GM12878 (cell line): ENCODE measurements at regions of chr5 and their contacts with region 1.

Region 1: DNA sequence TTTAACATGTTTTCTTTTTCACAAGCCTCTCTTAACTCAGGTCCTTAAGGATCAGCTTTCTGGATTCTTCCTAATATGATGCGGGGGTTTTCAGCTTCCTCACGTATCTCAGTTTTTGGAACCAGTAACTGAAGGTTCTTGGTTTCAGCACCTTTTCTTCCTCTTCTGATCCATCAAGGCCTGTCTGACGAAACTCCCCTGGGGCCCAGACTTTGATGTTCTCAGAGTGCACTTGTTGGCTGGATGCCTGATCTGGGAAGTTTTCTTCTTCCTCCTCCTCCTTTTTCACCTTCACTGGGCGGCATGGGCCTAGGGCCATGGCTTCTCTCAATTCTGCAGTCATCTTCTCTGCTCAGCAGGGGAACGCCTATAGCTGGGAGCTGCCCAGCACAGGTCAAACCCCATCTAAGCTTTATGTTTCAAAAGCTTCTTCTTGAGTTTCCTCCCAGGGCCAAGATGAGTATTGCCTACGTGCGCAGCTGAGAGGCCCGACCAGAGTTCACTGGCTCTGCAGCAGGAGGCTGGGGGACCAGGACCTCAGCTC is 44.8 kb downstream of the GHR start:
- DNase-seq: no peak
- ATAC-seq: peak; percentile 51
- H3K4me3 ChIP-seq: no peak overlapping the region
- H3K27ac ChIP-seq: no peak overlapping the region
- H3K4me1 ChIP-seq: no peaks in the 10 kb centered on the region
- H3K27me3 ChIP-seq: no peaks in the 10 kb centered on the region
- CTCF ChIP-seq: no peak
- EP300 ChIP-seq: no peak
- POLR2A ChIP-seq: no peak
- RAD21 ChIP-seq: no peak

Region 2: DNA sequence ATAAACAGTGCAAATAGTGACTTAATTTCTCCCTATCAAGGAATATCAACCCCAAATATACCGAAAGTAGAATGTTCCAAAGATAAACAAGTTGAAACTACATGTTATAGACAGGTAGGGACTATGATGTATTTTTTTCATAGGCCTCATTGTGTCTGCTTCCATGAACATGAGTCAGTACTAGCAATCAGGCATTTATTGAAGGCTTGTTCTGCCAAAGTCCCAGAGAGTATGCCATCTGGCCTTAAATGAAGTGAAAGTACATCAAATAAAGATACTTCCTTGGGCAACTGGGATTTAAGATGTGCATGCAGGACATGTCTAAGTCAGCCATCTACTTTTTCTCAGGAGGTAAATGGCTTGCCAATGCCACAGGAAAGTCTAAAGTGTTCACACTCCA is 38.4 kb before region 1 on chr5:
- CTCF ChIA-PET with region 1: interaction called, 22 read pairs
- POLR2A ChIA-PET with region 1: interaction called, 18 read pairs
- RAD21 ChIA-PET with region 1: interaction called, 79 read pairs
- SMC1A ChIA-PET with region 1: interaction called, 35 read pairs
- in situ Hi-C with region 1: no loop called
- intact Hi-C with region 1: no loop called
- DNase-seq: no peak
- ATAC-seq: no peak
- H3K4me3 ChIP-seq: no peak overlapping the region
- H3K27ac ChIP-seq: no peak overlapping the region
- H3K4me1 ChIP-seq: no peaks in the 10 kb centered on the region
- H3K27me3 ChIP-seq: no peaks in the 10 kb centered on the region
- CTCF ChIP-seq: no peak
- EP300 ChIP-seq: no peak
- POLR2A ChIP-seq: no peak
- RAD21 ChIP-seq: no peak

Region 3: GRCh38 chr5:42436051-42436450 is 32.0 kb before region 1 on chr5:
- CTCF ChIA-PET with region 1: no interaction called
- POLR2A ChIA-PET with region 1: interaction called, 9 read pairs
- RAD21 ChIA-PET with region 1: interaction called, 7 read pairs
- SMC1A ChIA-PET with region 1: interaction called, 25 read pairs
- in situ Hi-C with region 1: no loop called
- intact Hi-C with region 1: no loop called
- DNase-seq: no peak
- ATAC-seq: no peak
- H3K4me3 ChIP-seq: no peak overlapping the region
- H3K27ac ChIP-seq: no peak overlapping the region
- H3K4me1 ChIP-seq: no peaks in the 10 kb centered on the region
- H3K27me3 ChIP-seq: no peaks in the 10 kb centered on the region
- CTCF ChIP-seq: no peak
- EP300 ChIP-seq: no peak
- POLR2A ChIP-seq: no peak
- RAD21 ChIP-seq: no peak

Region 4: DNA sequence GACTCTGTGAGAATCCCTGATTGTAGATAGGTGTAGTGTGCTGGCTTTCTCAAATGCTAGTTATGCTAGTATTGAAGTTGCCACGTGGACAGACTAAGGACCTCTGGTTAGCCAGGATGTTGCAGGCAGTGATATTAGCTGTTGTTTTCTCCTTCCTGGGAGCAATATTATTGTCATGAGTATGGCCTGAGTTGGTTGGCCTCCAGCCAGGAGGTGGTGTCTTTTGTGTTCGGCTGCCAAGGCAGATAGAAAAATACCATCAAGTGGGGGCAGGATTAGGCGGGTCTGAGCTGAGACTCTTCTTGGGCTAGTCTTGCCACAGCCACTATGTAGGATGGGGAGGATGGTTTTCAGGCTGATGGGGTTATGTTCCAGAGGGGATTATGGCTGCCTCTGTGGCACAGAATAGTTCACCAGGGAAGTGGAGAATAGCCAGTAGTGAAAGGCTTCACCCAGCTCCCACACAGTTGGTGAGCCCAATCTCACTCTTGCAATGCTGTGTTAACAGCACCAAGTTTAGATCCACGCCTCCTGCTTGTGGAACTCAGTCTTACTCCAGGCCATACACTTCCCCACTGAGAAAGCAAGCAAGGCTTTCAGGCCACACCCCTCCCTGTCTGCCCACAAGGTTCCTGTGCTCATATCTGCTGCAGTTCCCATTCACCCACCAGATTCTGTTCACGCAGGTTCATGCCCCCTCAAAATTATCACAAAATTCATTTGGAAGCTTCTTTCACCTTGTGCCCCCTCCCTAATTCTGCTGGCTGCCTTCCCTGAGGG is 13.6 kb before region 1 on chr5:
- CTCF ChIA-PET with region 1: interaction called, 22 read pairs
- POLR2A ChIA-PET with region 1: interaction called, 17 read pairs
- RAD21 ChIA-PET with region 1: interaction called, 29 read pairs
- SMC1A ChIA-PET with region 1: interaction called, 31 read pairs
- in situ Hi-C with region 1: no loop called
- intact Hi-C with region 1: no loop called
- DNase-seq: no peak
- ATAC-seq: peak; percentile 42; the same call in 2 of the 3 replicates
- H3K4me3 ChIP-seq: no peak overlapping the region
- H3K27ac ChIP-seq: no peak overlapping the region
- H3K4me1 ChIP-seq: no peaks in the 10 kb centered on the region
- H3K27me3 ChIP-seq: no peaks in the 10 kb centered on the region
- CTCF ChIP-seq: no peak
- EP300 ChIP-seq: no peak
- POLR2A ChIP-seq: no peak
- RAD21 ChIP-seq: no peak

Region 5: DNA sequence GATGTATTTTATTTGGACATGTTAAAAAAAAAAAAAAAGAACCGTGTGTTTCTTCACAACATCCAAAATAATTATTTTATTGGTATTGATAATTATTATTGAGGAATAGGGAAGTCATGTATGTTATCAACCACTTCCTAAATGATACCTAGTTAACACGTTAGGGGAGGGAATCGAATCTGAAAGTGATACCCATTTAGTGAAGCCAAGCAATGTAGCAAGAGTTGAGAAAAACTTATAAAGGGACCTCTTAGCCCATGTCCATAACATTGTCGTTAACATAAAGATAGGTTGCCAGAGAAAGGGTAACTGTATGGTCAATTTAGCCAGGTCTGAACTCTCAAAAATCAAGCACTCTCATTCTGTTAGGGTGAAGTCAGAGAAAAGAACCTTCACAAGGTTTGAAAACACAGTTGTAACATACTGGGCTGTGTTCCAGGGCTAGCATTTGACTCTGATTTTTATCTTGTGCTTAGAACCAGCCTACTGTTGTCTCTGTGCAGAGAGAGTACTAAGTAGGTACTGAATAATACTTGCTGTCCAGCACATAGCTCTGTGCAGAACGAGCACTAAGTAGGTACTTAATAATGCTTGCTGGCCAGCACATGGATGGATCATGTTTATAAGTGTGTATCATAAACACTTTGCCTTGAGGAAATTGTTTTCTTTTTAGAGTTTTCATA is 15.6 kb after region 1 on chr5:
- CTCF ChIA-PET with region 1: interaction called, 5 read pairs
- POLR2A ChIA-PET with region 1: interaction called, 5 read pairs
- RAD21 ChIA-PET with region 1: interaction called, 6 read pairs
- SMC1A ChIA-PET with region 1: interaction called, 12 read pairs
- in situ Hi-C with region 1: no loop called
- intact Hi-C with region 1: no loop called
- DNase-seq: no peak
- ATAC-seq: peak; percentile 70
- H3K4me3 ChIP-seq: no peak overlapping the region
- H3K27ac ChIP-seq: no peak overlapping the region
- H3K4me1 ChIP-seq: no peaks in the 10 kb centered on the region
- H3K27me3 ChIP-seq: no peaks in the 10 kb centered on the region
- CTCF ChIP-seq: no peak
- EP300 ChIP-seq: no peak
- POLR2A ChIP-seq: no peak
- RAD21 ChIP-seq: no peak

Region 6: DNA sequence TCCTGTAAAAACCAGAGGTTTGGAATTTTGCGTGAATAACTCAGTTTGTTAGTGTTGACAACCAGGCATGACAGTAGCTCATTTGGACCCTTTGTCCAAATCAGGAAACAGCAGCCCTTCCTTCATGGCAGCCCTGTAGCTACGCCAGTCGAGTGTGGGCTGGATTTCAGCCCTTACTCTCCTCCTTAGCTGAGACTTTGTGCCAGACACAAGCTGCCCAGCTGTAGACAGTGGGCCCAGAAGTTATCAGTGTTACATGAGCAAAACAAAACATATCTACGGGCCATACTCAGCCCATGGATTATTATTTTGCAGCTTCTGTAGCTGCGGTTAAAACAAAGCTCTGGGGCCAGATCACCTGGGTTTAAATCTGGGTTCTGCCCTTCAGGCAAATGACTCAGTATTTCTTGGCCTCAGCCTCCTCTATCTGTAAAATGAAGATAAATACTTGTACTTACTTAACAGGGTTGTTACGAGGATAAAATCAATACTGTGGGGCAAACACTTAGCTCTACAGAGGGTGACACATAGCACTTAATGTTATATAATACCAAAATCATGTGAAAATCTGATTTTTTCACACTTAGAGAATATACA is 32.0 kb after region 1 on chr5:
- CTCF ChIA-PET with region 1: interaction called, 3 read pairs
- POLR2A ChIA-PET with region 1: interaction called, 3 read pairs
- RAD21 ChIA-PET with region 1: interaction called, 10 read pairs
- SMC1A ChIA-PET with region 1: interaction called, 3 read pairs
- in situ Hi-C with region 1: no loop called
- intact Hi-C with region 1: no loop called
- DNase-seq: no peak
- ATAC-seq: no peak
- H3K4me3 ChIP-seq: no peak overlapping the region
- H3K27ac ChIP-seq: no peak overlapping the region
- H3K4me1 ChIP-seq: no peaks in the 10 kb centered on the region
- H3K27me3 ChIP-seq: no peaks in the 10 kb centered on the region
- CTCF ChIP-seq: no peak
- EP300 ChIP-seq: no peak
- POLR2A ChIP-seq: no peak
- RAD21 ChIP-seq: no peak

Region 7: GRCh38 chr5:42514754-42515153 is 46.7 kb after region 1 on chr5:
- CTCF ChIA-PET with region 1: interaction called, 10 read pairs
- POLR2A ChIA-PET with region 1: interaction called, 3 read pairs
- RAD21 ChIA-PET with region 1: interaction called, 6 read pairs
- SMC1A ChIA-PET with region 1: interaction called, 14 read pairs
- in situ Hi-C with region 1: no loop called
- intact Hi-C with region 1: no loop called
- DNase-seq: no peak
- ATAC-seq: peak; percentile 39; the same call in 2 of the 3 replicates
- H3K4me3 ChIP-seq: no peak overlapping the region
- H3K27ac ChIP-seq: no peak overlapping the region
- H3K4me1 ChIP-seq: no peaks in the 10 kb centered on the region
- H3K27me3 ChIP-seq: no peaks in the 10 kb centered on the region
- CTCF ChIP-seq: peak in 2 of 3 experiments; percentile 8 to 14; a peak in 2 of 6 replicates
- EP300 ChIP-seq: no peak
- POLR2A ChIP-seq: no peak
- RAD21 ChIP-seq: 0 out of 2 replicates have a peak, but pooled peaks have one; percentile 4

Region 8: GRCh38 chr5:42666869-42667268 is 198.8 kb after region 1 on chr5:
- CTCF ChIA-PET with region 1: no interaction called
- POLR2A ChIA-PET with region 1: no interaction called
- RAD21 ChIA-PET with region 1: no interaction called
- SMC1A ChIA-PET with region 1: no interaction called
- in situ Hi-C with region 1: no loop called
- intact Hi-C with region 1: no loop called
- DNase-seq: no peak
- ATAC-seq: no peak
- H3K4me3 ChIP-seq: no peak overlapping the region
- H3K27ac ChIP-seq: no peak overlapping the region
- H3K4me1 ChIP-seq: no peaks in the 10 kb centered on the region
- H3K27me3 ChIP-seq: no peaks in the 10 kb centered on the region
- CTCF ChIP-seq: no peak
- EP300 ChIP-seq: no peak
- POLR2A ChIP-seq: no peak
- RAD21 ChIP-seq: no peak